ENCODE measurements at regions of chr5 and their contacts with region 1.

Region 1: DNA sequence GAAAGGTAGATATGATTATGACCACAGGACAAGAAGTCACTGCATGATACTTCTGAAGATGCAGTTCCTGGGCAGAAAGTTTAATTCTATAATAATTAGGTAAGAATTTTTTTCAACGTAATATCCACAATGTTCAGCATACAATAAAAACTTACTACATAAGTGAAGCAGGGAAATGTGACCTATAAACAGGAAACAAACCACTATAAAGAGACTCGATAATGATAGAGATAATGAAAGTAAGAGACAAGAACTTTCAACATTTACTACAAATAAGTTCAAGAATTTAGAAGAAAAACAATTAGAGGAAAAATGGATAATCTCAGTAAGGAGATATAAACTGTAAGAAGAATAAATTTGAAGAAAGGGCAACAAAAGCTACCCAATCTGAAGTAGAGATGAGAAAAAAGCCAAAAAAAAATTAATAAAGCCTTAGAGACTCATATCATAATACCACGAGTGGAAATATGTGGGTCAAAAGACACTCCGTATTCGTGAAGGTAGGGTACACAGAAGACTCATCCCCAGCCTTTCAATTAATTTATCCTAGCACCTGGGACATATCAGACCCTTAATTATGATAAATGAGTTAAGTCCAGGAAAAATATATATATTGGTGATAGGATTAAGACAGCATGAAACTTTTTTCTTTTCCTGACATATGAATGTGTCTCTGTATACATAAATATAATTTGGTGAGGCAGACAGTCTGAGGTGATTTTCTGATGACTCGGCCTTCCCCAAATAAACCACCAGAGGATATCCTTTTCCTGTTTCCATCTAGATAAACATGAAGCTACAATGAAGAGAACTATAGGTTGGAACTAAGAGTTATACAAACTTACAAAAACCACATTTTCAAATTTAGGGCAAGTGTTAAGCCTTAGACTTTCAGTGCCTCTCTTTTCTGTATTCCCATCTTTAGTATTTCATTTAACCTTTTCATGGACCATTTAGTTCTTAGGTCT is 120.4 kb downstream of the RAPGEF6 start:
- DNase-seq: peak in 5 of 9 donors; percentile 24 to 50 (median 47)
- ATAC-seq: peak; percentile 85
- H3K4me3 ChIP-seq: peak overlapping the region; percentile 41
- H3K4me3 Mint-ChIP-seq: peak overlapping the region; percentile 68 to 95 (median 84)
- H3K27ac ChIP-seq: peak overlapping the region; percentile 56
- H3K27ac Mint-ChIP-seq: peak overlapping the region; percentile 63 to 95 (median 88)
- H3K4me1 ChIP-seq: peaks cover 20 to 28% of the 10 kb centered on the region in 2 donors
- H3K4me1 Mint-ChIP-seq: peaks cover 35 to 91% (median 77%) of the 10 kb centered on the region in 7 donors
- H3K27me3 ChIP-seq: no peaks in the 10 kb centered on the region
- H3K27me3 Mint-ChIP-seq: no peaks in the 10 kb centered on the region

Region 2: DNA sequence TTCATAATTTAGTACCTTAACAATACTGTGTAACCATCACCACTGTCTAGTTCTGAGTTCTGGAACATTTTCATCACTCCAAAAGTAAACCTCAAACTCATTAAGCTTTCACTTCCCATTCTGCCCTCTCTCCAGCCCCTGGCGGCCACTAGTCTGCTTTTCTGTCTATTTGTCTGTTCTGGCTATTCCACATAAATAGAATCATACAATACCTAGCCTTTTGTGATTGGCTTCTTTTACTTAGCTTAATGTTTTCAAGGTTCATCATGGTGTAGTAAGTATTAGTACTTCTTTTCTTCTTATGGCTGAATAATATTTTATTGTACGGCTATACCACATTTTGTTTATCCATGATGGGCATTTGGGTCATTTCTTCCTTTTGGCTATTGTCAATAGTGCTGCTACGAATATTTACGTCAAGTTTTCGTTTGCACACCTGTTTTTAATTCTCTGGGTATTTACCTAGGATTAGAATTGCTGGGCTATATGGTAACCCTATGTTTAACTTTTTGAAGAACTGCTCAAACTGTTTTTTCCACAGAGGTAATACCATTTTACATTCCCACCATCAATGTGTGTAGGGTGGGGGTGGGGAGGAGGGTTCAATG is 18.1 kb before region 1 on chr5:
- CTCF ChIA-PET with region 1: no interaction called
- POLR2A ChIA-PET with region 1: interaction called, 7 read pairs
- intact Hi-C with region 1: loop called in 1 of 2 experiments (anchors 2 kb)
- DNase-seq: no peak
- ATAC-seq: peak; percentile 34
- H3K4me3 ChIP-seq: no peak overlapping the region
- H3K4me3 Mint-ChIP-seq: no peak overlapping the region
- H3K27ac ChIP-seq: no peak overlapping the region
- H3K27ac Mint-ChIP-seq: peak overlapping the region in 6 of 9 donors; percentile 48 to 76 (median 64)
- H3K4me1 ChIP-seq: no peaks in the 10 kb centered on the region
- H3K4me1 Mint-ChIP-seq: peaks cover 16 to 62% (median 49%) of the 10 kb centered on the region in 7 donors
- H3K27me3 ChIP-seq: no peaks in the 10 kb centered on the region
- H3K27me3 Mint-ChIP-seq: no peaks in the 10 kb centered on the region

Region 3: DNA sequence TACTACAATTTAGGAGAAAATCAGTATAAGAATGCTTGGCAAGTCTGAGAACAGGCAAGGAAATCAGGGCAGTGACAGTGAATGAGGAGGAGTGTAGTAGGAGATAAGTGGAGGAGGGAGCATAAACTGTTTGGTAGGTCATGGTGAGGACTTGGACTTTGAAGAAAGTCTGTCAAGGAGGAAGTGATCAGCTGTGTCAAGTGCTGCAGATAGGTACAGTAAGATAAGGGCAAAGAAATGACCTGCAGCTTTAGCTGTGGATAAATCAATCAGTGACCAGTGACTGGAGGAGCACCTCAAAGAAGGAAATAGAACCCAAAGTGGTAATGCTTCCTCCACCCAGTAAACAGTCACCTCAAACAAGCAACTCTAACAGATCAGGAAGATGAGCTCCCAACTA is 14.1 kb after region 1 on chr5:
- CTCF ChIA-PET with region 1: interaction called, 5 read pairs
- POLR2A ChIA-PET with region 1: interaction called, 9 read pairs
- intact Hi-C with region 1: loop called (anchors 1 kb)
- DNase-seq: no peak
- ATAC-seq: no peak
- H3K4me3 ChIP-seq: peak overlapping the region; percentile 18
- H3K4me3 Mint-ChIP-seq: peak overlapping the region; percentile 16 to 85 (median 67)
- H3K27ac ChIP-seq: peak overlapping the region; percentile 11
- H3K27ac Mint-ChIP-seq: peak overlapping the region; percentile 53 to 91 (median 81)
- H3K4me1 ChIP-seq: peaks cover 35 to 77% of the 10 kb centered on the region in 2 donors
- H3K4me1 Mint-ChIP-seq: peaks cover 49 to 91% (median 79%) of the 10 kb centered on the region in 7 donors
- H3K27me3 ChIP-seq: no peaks in the 10 kb centered on the region
- H3K27me3 Mint-ChIP-seq: no peaks in the 10 kb centered on the region

Region 4: GRCh38 chr5:131548176-131548575 is 33.6 kb after region 1 on chr5:
- CTCF ChIA-PET with region 1: no interaction called
- POLR2A ChIA-PET with region 1: interaction called, 6 read pairs
- intact Hi-C with region 1: loop called (anchors 1 kb)
- DNase-seq: peak in 7 of 9 donors; percentile 60 to 82 (median 68)
- ATAC-seq: peak; percentile 97
- H3K4me3 ChIP-seq: peak overlapping the region; percentile 63
- H3K4me3 Mint-ChIP-seq: peak overlapping the region; percentile 93 to 100 (median 98)
- H3K27ac ChIP-seq: peak overlapping the region; percentile 83
- H3K27ac Mint-ChIP-seq: peak overlapping the region; percentile 92 to 99 (median 97)
- H3K4me1 ChIP-seq: peaks cover 6 to 44% of the 10 kb centered on the region in 2 donors
- H3K4me1 Mint-ChIP-seq: peaks cover 28 to 71% (median 58%) of the 10 kb centered on the region in 7 donors
- H3K27me3 ChIP-seq: no peaks in the 10 kb centered on the region
- H3K27me3 Mint-ChIP-seq: no peaks in the 10 kb centered on the region

Region 5: GRCh38 chr5:131563434-131564228 is 49.0 kb after region 1 on chr5:
- CTCF ChIA-PET with region 1: no interaction called
- POLR2A ChIA-PET with region 1: no interaction called
- intact Hi-C with region 1: loop called in 1 of 2 experiments (anchors 2 kb)
- DNase-seq: peak in 1 of 9 donors; percentile 10
- ATAC-seq: no peak
- H3K4me3 ChIP-seq: no peak overlapping the region
- H3K4me3 Mint-ChIP-seq: peak overlapping the region in 5 of 10 donors; percentile 1 to 33 (median 19)
- H3K27ac ChIP-seq: no peak overlapping the region
- H3K27ac Mint-ChIP-seq: peak overlapping the region in 7 of 9 donors; percentile 10 to 77 (median 57)
- H3K4me1 ChIP-seq: peaks cover 0 to 11% of the 10 kb centered on the region in 2 donors
- H3K4me1 Mint-ChIP-seq: peaks cover 18 to 74% (median 60%) of the 10 kb centered on the region in 7 donors
- H3K27me3 ChIP-seq: no peaks in the 10 kb centered on the region
- H3K27me3 Mint-ChIP-seq: no peaks in the 10 kb centered on the region

Region 6: DNA sequence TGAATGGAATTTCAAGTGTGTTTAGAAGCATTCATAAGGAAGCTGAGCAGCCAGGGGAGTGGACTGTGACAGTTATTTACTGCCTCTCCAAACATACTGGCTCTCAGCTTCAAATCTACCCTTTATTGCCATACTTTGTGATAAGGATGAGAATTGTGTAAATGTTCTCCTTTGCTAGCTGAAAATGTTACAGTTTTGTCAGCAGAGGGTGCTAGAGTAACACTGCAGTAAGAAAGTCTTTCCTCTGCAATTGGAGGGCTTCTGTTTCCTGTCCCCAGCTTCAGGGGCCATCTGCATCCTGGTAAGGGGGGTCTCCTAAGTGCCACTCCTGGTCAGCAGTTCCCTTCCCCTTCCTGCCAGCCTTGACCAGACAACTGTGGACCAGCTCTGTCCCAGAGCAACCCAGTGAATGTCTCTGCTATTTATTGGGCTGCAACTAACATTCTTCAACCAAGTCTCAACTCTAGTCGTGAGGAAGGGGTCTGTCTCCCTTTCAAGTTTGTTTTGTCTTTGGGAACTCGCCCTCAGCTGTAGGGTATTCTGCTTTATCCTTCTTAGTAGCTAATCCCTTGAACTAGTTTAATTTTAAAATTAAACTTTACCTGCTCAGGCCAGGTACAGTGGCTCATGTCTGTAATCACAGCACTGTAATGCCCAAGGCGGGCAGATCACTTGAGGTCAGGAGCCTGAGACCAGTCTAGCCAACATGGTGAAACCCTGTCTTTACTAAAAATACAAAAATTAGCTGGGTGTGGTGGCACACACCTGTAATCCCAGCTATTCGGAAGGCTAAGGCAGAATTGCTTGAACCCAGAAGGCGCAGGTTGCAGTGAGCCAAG is 75.1 kb after region 1 on chr5:
- CTCF ChIA-PET with region 1: interaction called, 10 read pairs
- POLR2A ChIA-PET with region 1: interaction called, 3 read pairs
- intact Hi-C with region 1: loop called in 1 of 2 experiments (anchors 1 kb)
- DNase-seq: peak in 8 of 9 donors; percentile 8 to 71 (median 62)
- ATAC-seq: peak; percentile 80
- H3K4me3 ChIP-seq: no peak overlapping the region
- H3K4me3 Mint-ChIP-seq: no peak overlapping the region
- H3K27ac ChIP-seq: peak overlapping the region; percentile 9
- H3K27ac Mint-ChIP-seq: peak overlapping the region; percentile 10 to 75 (median 52)
- H3K4me1 ChIP-seq: peaks cover 4 to 5% of the 10 kb centered on the region in 2 donors
- H3K4me1 Mint-ChIP-seq: peaks cover 21 to 63% (median 58%) of the 10 kb centered on the region in 7 donors
- H3K27me3 ChIP-seq: no peaks in the 10 kb centered on the region
- H3K27me3 Mint-ChIP-seq: no peaks in the 10 kb centered on the region

Region 7: DNA sequence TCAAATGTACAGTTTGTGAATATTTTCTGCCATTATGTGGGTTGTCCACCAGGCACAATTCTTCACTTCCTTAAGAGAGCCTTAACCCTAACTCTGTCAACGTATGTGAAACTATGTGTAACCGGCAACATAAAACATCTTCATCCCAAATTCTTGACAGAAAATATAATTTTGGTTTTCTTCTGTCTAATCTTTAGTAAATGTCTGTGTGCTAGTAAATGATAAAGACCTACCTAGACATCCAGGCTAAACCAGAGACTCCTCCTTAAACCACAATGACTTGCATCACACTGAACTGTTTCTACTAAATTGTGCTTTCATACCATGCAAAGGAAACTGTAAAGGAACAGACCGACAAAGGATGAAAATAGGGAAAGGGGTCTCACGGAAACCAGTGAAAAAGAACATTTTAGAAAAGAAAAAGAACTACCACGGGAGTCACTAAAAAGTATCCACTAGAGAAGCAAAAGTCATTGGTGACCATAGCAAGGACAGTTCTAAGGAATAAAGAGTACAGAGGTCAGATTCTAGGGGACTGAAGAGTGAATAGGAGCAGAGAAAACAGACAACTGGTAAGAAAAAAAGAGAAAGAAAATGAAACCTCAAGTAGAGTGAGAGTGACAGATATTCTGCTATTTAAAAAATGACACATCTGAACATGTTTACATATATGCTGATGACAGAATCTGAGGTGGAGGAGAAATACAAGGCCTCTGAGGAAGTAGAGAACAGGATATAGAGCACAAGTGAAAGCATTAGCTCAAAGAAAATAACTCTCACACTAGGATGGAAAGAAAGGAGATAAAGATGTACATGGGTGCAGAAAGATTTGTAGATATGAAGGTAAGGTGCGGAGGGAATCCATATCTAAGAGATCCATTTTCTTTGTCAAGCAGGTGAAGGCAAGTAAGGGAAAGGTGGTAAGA is 232.8 kb after region 1 on chr5:
- CTCF ChIA-PET with region 1: no interaction called
- POLR2A ChIA-PET with region 1: no interaction called
- intact Hi-C with region 1: no loop called
- DNase-seq: peak in 7 of 9 donors; percentile 21 to 64 (median 48)
- ATAC-seq: peak; percentile 80
- H3K4me3 ChIP-seq: no peak overlapping the region
- H3K4me3 Mint-ChIP-seq: peak overlapping the region; percentile 14 to 80 (median 68)
- H3K27ac ChIP-seq: peak overlapping the region; percentile 63
- H3K27ac Mint-ChIP-seq: peak overlapping the region; percentile 84 to 96 (median 89)
- H3K4me1 ChIP-seq: peaks cover 10 to 11% of the 10 kb centered on the region in 2 donors
- H3K4me1 Mint-ChIP-seq: peaks cover 28 to 57% (median 51%) of the 10 kb centered on the region in 7 donors
- H3K27me3 ChIP-seq: no peaks in the 10 kb centered on the region
- H3K27me3 Mint-ChIP-seq: no peaks in the 10 kb centered on the region

Region 8: DNA sequence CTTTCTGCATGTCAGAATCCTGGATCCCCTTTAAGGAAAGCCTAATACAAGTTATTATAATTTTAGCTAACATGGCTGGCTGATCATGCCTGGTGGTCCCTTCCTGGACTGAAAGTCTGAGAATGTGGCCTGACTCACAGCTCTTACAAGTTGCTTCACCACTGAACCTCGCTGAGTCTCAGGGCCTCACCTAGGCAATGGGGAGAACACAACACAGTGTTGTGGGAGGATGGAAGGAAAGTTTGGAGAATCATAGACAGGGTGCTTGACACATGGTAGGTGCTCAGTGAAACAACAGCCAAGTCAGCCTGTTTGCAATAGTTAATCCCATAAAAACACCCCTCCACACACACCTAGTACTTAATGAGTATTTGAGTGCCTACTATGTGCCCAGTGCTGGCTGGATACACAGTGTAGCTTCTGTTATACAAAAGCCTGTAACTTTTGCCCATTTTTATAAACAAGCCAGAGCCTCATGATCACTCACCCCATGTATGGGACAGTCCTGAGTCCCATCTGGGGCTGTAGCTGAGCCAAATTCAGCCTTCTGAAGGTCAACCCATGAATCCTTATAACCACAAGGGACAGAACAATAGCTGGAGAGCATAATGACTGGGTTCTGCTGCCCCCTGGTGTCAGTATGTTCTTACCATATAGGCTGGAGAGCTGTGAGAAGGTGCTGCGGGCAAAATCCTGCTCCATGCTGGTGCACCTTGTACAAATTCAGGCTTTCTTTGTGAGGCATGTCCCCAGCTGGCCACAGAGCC is 493.0 kb after region 1 on chr5:
- CTCF ChIA-PET with region 1: interaction called, 4 read pairs
- POLR2A ChIA-PET with region 1: interaction called, 3 read pairs
- intact Hi-C with region 1: loop called in 1 of 2 experiments (anchors 2 kb)
- DNase-seq: peak; percentile 47 to 73 (median 64)
- ATAC-seq: peak; percentile 74
- H3K4me3 ChIP-seq: no peak overlapping the region
- H3K4me3 Mint-ChIP-seq: peak overlapping the region in 1 of 10 donors; percentile 3
- H3K27ac ChIP-seq: no peak overlapping the region
- H3K27ac Mint-ChIP-seq: peak overlapping the region in 2 of 9 donors; percentile 3 to 43
- H3K4me1 ChIP-seq: peaks cover 3 to 7% of the 10 kb centered on the region in 2 donors
- H3K4me1 Mint-ChIP-seq: peaks cover 19 to 39% (median 20%) of the 10 kb centered on the region in 7 donors
- H3K27me3 ChIP-seq: no peaks in the 10 kb centered on the region
- H3K27me3 Mint-ChIP-seq: peaks cover 4 to 47% (median 18%) of the 10 kb centered on the region in 5 donors